Right lobe of liver (tissue), 6 donors: ENCODE measurements at regions of chr17 and their contacts with region 1.

Region 1: GRCh38 chr17:75412455-75413317 is 7.2 kb upstream of the GRB2 start:
- DNase-seq: peak in 2 of 3 donors; percentile 45 to 63
- ATAC-seq: peak; percentile 82 to 94 (median 88)
- H3K4me3 ChIP-seq: peak overlapping the region in 1 of 3 donors; percentile 31
- H3K27ac ChIP-seq: no peak overlapping the region
- H3K4me1 ChIP-seq: peaks cover 0 to 5% (median 0%) of the 10 kb centered on the region in 4 donors
- H3K27me3 ChIP-seq: no peaks in the 10 kb centered on the region
- CTCF ChIP-seq: peak; percentile 75 to 84 (median 79)
- POLR2A ChIP-seq: no peak

Region 2: GRCh38 chr17:75271233-75271954 is 141.3 kb before region 1 on chr17:
- intact Hi-C with region 1: loop called in 1 of 2 experiments (anchors 10 kb)
- DNase-seq: peak; percentile 83 to 86 (median 86)
- ATAC-seq: peak; percentile 75 to 91 (median 84)
- H3K4me3 ChIP-seq: peak overlapping the region; percentile 62 to 93 (median 86)
- H3K27ac ChIP-seq: peak overlapping the region; percentile 12 to 88 (median 43)
- H3K4me1 ChIP-seq: peaks cover 0 to 15% (median 6%) of the 10 kb centered on the region in 4 donors
- H3K27me3 ChIP-seq: no peaks in the 10 kb centered on the region
- CTCF ChIP-seq: peak; percentile 56 to 97 (median 86)
- POLR2A ChIP-seq: peak; percentile 6

Region 3: GRCh38 chr17:75289115-75289831 is 123.4 kb before region 1 on chr17 and contains the start of gene SLC25A19:
- intact Hi-C with region 1: no loop called
- DNase-seq: peak; percentile 98 to 99 (median 99)
- ATAC-seq: peak; percentile 94 to 98 (median 96)
- H3K4me3 ChIP-seq: peak within 1 kb of the TSS; percentile 74 to 86 (median 84)
- H3K27ac ChIP-seq: peak within 1 kb of the TSS; percentile 51 to 88 (median 86)
- H3K4me1 ChIP-seq: no peaks in the 10 kb centered on the region
- H3K27me3 ChIP-seq: no peaks in the 10 kb centered on the region
- CTCF ChIP-seq: no peak
- POLR2A ChIP-seq: peak; percentile 97
- total RNA-seq, gene SLC25A19: 3.8 to 13.4 (median 7.3) TPM

Region 4: GRCh38 chr17:75319904-75320691 is 92.6 kb before region 1 on chr17:
- intact Hi-C with region 1: loop called in 1 of 2 experiments (anchors 10 kb)
- DNase-seq: no peak
- ATAC-seq: no peak
- H3K4me3 ChIP-seq: no peak overlapping the region
- H3K27ac ChIP-seq: no peak overlapping the region
- H3K4me1 ChIP-seq: peaks cover 0 to 2% (median 0%) of the 10 kb centered on the region in 4 donors
- H3K27me3 ChIP-seq: no peaks in the 10 kb centered on the region
- CTCF ChIP-seq: no peak
- POLR2A ChIP-seq: no peak